GM10248 (cell line): ENCODE measurements at regions of chr4 and their contacts with region 1.

Region 1: GRCh38 chr4:36332023-36332781 is 50.8 kb downstream of the DTHD1 start:
- DNase-seq: no peak
- CTCF ChIP-seq: no peak

Region 2: GRCh38 chr4:36255577-36255976 is 76.6 kb before region 1 on chr4:
- CTCF ChIA-PET with region 1: interaction called, 10 read pairs
- POLR2A ChIA-PET with region 1: no interaction called
- DNase-seq: peak; percentile 42
- CTCF ChIP-seq: no peak

Region 3: GRCh38 chr4:36301127-36301526 is 31.1 kb before region 1 on chr4:
- CTCF ChIA-PET with region 1: no interaction called
- POLR2A ChIA-PET with region 1: no interaction called
- DNase-seq: no peak
- CTCF ChIP-seq: no peak

Region 4: DNA sequence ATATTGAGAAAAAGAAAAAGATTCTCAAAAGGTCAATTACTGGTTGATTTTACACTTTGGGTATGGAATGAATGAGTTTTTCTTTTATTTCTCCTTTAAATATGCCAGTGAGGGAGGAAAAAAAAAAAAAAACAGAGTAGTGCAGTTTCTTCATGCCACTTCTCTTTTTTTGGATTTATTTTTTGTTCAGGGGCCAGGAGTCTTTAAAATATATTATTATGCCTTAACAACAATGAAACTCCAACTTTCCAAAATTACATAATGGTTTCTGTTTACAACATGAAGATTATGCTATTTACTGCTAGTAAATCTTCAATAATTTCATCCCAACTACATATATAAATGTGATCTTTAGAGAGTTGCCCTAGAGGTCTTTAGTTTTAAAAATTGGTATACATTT is 18.9 kb before region 1 on chr4:
- CTCF ChIA-PET with region 1: no interaction called
- POLR2A ChIA-PET with region 1: no interaction called
- DNase-seq: no peak
- CTCF ChIP-seq: no peak

Region 5: DNA sequence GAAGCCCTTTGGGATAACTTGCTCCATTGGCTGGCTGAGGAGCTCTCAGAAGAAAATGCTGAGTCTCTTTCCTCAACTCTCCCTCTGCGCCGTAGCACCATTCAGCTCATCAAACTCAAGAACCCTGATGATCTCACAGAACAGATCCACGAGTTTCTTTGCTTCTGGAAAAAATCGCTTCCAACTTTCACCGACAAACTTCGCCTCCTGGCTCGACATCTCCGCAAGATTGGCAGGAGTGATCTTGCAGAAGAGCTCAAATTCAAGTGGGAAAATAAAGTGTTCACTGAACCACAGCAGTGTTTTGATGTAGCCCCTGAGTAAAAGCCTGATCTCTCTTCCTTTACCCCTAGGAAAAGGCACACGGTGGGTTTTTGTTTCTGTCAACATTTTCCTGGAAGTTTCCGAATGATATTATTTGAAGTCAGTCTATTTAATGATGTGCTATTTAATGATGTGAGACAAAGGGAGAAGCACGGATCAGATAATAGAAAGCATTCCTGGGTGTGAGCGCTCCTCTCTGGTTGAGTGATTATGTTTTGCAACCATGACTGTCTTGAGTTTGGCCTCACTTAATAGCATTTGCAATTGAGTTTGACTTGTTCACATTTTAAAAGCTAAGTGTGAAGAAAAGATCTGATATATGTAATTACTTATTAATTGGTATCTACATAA is 11.4 kb after region 1 on chr4:
- CTCF ChIA-PET with region 1: interaction called, 15 read pairs
- POLR2A ChIA-PET with region 1: no interaction called
- DNase-seq: no peak
- CTCF ChIP-seq: no peak

Region 6: GRCh38 chr4:36351082-36351666 is 19.0 kb after region 1 on chr4:
- CTCF ChIA-PET with region 1: interaction called, 13 read pairs
- POLR2A ChIA-PET with region 1: no interaction called
- DNase-seq: peak; percentile 47
- CTCF ChIP-seq: peak; percentile 80

Region 7: DNA sequence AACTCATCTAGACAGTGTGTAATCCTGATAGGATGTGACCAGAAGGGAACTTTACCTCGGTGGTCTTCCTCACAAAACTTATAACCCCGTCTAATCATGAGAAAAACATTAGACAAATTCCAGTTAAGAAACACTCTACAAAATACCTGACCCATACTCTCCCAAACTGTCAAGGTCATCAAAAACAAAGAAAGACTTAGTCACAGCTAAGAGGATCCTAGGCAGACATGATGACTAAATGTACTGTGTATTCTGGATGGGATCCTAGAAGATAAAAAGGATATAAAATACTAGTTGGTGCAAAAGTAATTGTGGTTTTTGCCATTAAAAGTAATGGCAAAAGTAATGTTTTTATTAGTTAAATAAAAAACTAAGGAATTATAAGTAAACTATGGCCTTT is 30.8 kb after region 1 on chr4:
- CTCF ChIA-PET with region 1: no interaction called
- POLR2A ChIA-PET with region 1: no interaction called
- DNase-seq: no peak
- CTCF ChIP-seq: no peak